Endothelial cell of umbilical vein (primary cell): ENCODE measurements at regions of chr6 and their contacts with region 1.

Region 1: DNA sequence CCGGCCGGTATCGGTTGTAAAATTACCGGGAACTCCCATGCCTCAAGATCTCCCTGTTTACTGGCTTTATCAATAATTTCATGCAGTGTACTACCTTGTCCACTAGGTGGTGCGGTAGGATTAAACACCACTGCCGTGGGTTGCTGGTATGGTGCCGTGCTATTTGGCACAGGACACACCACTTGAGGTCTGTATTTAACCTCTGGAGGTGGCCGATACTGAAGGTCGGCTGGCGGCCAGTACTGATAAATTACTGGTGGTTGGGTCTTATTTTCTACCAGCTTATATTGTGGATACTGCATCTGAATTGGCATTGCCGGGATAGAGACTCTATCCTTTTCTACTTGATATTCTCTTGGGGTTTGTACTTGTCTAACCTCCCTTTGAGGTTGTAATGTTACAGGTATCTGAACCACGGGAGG is 14.3 kb upstream of the PTCRA start:
- DNase-seq: peak; percentile 85
- H3K4me3 ChIP-seq: no peak overlapping the region
- H3K27ac ChIP-seq: no peak overlapping the region
- H3K4me1 ChIP-seq: peaks cover 7% of the 10 kb centered on the region
- H3K27me3 ChIP-seq: no peaks in the 10 kb centered on the region
- CTCF ChIP-seq: peak; percentile 64 to 79
- POLR2A ChIP-seq: no peak

Region 2: GRCh38 chr6:42471142-42471541 is 430.4 kb before region 1 on chr6:
- CTCF ChIA-PET with region 1: no interaction called
- POLR2A ChIA-PET with region 1: no interaction called
- dilution Hi-C with region 1: no loop called
- intact Hi-C with region 1: no loop called
- DNase-seq: no peak
- H3K4me3 ChIP-seq: no peak overlapping the region
- H3K27ac ChIP-seq: no peak overlapping the region
- H3K4me1 ChIP-seq: no peaks in the 10 kb centered on the region
- H3K27me3 ChIP-seq: peaks cover 1 to 5% of the 10 kb centered on the region in 2 experiments
- CTCF ChIP-seq: no peak
- POLR2A ChIP-seq: no peak

Region 3: GRCh38 chr6:42726485-42727086 is 175.0 kb before region 1 on chr6:
- CTCF ChIA-PET with region 1: no interaction called
- POLR2A ChIA-PET with region 1: no interaction called
- dilution Hi-C with region 1: no loop called
- intact Hi-C with region 1: loop called (anchors 5 kb)
- DNase-seq: peak; percentile 88
- H3K4me3 ChIP-seq: peak overlapping the region; percentile 31 to 68 (median 48)
- H3K27ac ChIP-seq: peak overlapping the region; percentile 37
- H3K4me1 ChIP-seq: peaks cover 11% of the 10 kb centered on the region
- H3K27me3 ChIP-seq: no peaks in the 10 kb centered on the region
- CTCF ChIP-seq: peak; percentile 79 to 86
- POLR2A ChIP-seq: no peak

Region 4: GRCh38 chr6:42890311-42891198 is 11.0 kb before region 1 on chr6:
- CTCF ChIA-PET with region 1: no interaction called
- POLR2A ChIA-PET with region 1: interaction called, 4 read pairs
- dilution Hi-C with region 1: no loop called
- intact Hi-C with region 1: loop called (anchors 1 kb)
- DNase-seq: peak; percentile 95
- H3K4me3 ChIP-seq: peak overlapping the region; percentile 26 to 68 (median 62)
- H3K27ac ChIP-seq: peak overlapping the region; percentile 44
- H3K4me1 ChIP-seq: peaks cover 4% of the 10 kb centered on the region
- H3K27me3 ChIP-seq: no peaks in the 10 kb centered on the region
- CTCF ChIP-seq: no peak
- POLR2A ChIP-seq: peak; percentile 95

Region 5: GRCh38 chr6:42963855-42964605 is 62.5 kb after region 1 on chr6:
- CTCF ChIA-PET with region 1: no interaction called
- POLR2A ChIA-PET with region 1: no interaction called
- dilution Hi-C with region 1: no loop called
- intact Hi-C with region 1: loop called (anchors 2 kb)
- DNase-seq: peak; percentile 50
- H3K4me3 ChIP-seq: no peak overlapping the region
- H3K27ac ChIP-seq: no peak overlapping the region
- H3K4me1 ChIP-seq: peaks cover 10% of the 10 kb centered on the region
- H3K27me3 ChIP-seq: no peaks in the 10 kb centered on the region
- CTCF ChIP-seq: peak; percentile 8 to 31
- POLR2A ChIP-seq: no peak

Region 6: GRCh38 chr6:43013843-43014433 is 112.4 kb after region 1 on chr6 and contains the starts of genes KLHDC3 and MEA1:
- CTCF ChIA-PET with region 1: interaction called, 5 read pairs
- POLR2A ChIA-PET with region 1: no interaction called
- dilution Hi-C with region 1: no loop called
- intact Hi-C with region 1: loop called (anchors 1 kb)
- DNase-seq: peak; percentile 100
- H3K4me3 ChIP-seq: peak within 1 kb of the TSS; percentile 58 to 87 (median 72)
- H3K27ac ChIP-seq: peak within 1 kb of the TSS; percentile 52
- H3K4me1 ChIP-seq: peaks cover 17% of the 10 kb centered on the region
- H3K27me3 ChIP-seq: no peaks in the 10 kb centered on the region
- CTCF ChIP-seq: no peak
- POLR2A ChIP-seq: no peak
- total RNA-seq, gene KLHDC3: 84.6 and 84.8 TPM in 2 replicates
- total RNA-seq, gene MEA1: 55.6 and 62.5 TPM in 2 replicates

Region 7: GRCh38 chr6:43143235-43144124 is 241.9 kb after region 1 on chr6:
- CTCF ChIA-PET with region 1: interaction called, 28 read pairs
- POLR2A ChIA-PET with region 1: no interaction called
- dilution Hi-C with region 1: no loop called
- intact Hi-C with region 1: loop called (anchors 1 kb)
- DNase-seq: peak; percentile 84
- H3K4me3 ChIP-seq: no peak overlapping the region
- H3K27ac ChIP-seq: no peak overlapping the region
- H3K4me1 ChIP-seq: no peaks in the 10 kb centered on the region
- H3K27me3 ChIP-seq: no peaks in the 10 kb centered on the region
- CTCF ChIP-seq: peak; percentile 98 to 100
- POLR2A ChIP-seq: no peak